Heart left ventricle (tissue), 16 donors: ENCODE measurements at regions of chr3 and their contacts with region 1.

Region 1: GRCh38 chr3:43286115-43286840 is at the start of gene SNRK:
- DNase-seq: peak; percentile 90 to 97 (median 93)
- ATAC-seq: peak; percentile 80 to 97 (median 90)
- H3K4me3 ChIP-seq: peak within 1 kb of the TSS; percentile 60 to 84 (median 74)
- H3K27ac ChIP-seq: peak within 1 kb of the TSS; percentile 56 to 97 (median 92)
- H3K4me1 ChIP-seq: peaks cover 18 to 56% (median 41%) of the 10 kb centered on the region in 12 donors
- H3K27me3 ChIP-seq: no peaks in the 10 kb centered on the region
- CTCF ChIP-seq: peak in 11 of 12 donors; percentile 10 to 59 (median 38)
- POLR2A ChIP-seq: peak; percentile 85 to 95
- total RNA-seq, gene SNRK: 16.8 to 41.5 (median 23.8) TPM

Region 2: GRCh38 chr3:43223670-43224364 is 62.5 kb before region 1 on chr3:
- intact Hi-C with region 1: loop called in 1 of 10 experiments (anchors 10 kb)
- DNase-seq: no peak
- ATAC-seq: no peak
- H3K4me3 ChIP-seq: no peak overlapping the region
- H3K27ac ChIP-seq: no peak overlapping the region
- H3K4me1 ChIP-seq: peaks cover 0 to 2% (median 0%) of the 10 kb centered on the region in 12 donors
- H3K27me3 ChIP-seq: no peaks in the 10 kb centered on the region
- CTCF ChIP-seq: peak; percentile 25 to 63 (median 46)
- POLR2A ChIP-seq: no peak

Region 3: GRCh38 chr3:43326891-43327581 is 40.8 kb after region 1 on chr3:
- intact Hi-C with region 1: loop called in 2 of 10 experiments (anchors 5 kb)
- DNase-seq: no peak
- ATAC-seq: peak; percentile 63 to 84 (median 78)
- H3K4me3 ChIP-seq: no peak overlapping the region
- H3K27ac ChIP-seq: peak overlapping the region in 11 of 12 donors; percentile 51 to 85 (median 74)
- H3K4me1 ChIP-seq: peaks cover 0 to 84% (median 56%) of the 10 kb centered on the region in 12 donors
- H3K27me3 ChIP-seq: no peaks in the 10 kb centered on the region
- CTCF ChIP-seq: no peak
- POLR2A ChIP-seq: no peak

Region 4: DNA sequence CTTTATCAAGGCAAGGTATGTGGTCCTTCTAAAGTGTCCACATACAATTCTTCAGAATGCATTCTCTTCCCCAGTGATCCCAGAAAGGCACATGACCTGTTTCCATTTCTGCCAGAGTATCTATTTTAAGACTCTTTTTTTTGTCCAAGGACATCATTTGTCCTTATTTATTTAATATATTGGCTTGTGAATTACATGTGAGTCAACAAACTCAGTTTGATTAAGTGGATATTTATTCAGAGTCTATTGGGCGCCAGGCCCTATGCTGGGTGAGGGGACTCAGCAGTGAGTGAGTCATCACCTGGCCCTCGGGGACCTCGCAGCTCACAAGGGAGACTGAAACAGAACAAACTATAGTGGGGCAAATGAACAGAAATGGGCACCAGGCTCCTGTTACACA is 136.9 kb after region 1 on chr3:
- intact Hi-C with region 1: loop called in 2 of 10 experiments (anchors 5 to 10 kb)
- DNase-seq: peak in 4 of 5 donors; percentile 32 to 51 (median 46)
- ATAC-seq: peak; percentile 11 to 58 (median 32)
- H3K4me3 ChIP-seq: no peak overlapping the region
- H3K27ac ChIP-seq: peak overlapping the region; percentile 12 to 95 (median 79)
- H3K4me1 ChIP-seq: peaks cover 0 to 55% (median 16%) of the 10 kb centered on the region in 12 donors
- H3K27me3 ChIP-seq: no peaks in the 10 kb centered on the region
- CTCF ChIP-seq: no peak
- POLR2A ChIP-seq: no peak

Region 5: GRCh38 chr3:43442872-43443395 is 156.7 kb after region 1 on chr3:
- intact Hi-C with region 1: no loop called
- DNase-seq: no peak
- ATAC-seq: no peak
- H3K4me3 ChIP-seq: no peak overlapping the region
- H3K27ac ChIP-seq: no peak overlapping the region
- H3K4me1 ChIP-seq: no peaks in the 10 kb centered on the region
- H3K27me3 ChIP-seq: no peaks in the 10 kb centered on the region
- CTCF ChIP-seq: no peak
- POLR2A ChIP-seq: no peak

Region 6: DNA sequence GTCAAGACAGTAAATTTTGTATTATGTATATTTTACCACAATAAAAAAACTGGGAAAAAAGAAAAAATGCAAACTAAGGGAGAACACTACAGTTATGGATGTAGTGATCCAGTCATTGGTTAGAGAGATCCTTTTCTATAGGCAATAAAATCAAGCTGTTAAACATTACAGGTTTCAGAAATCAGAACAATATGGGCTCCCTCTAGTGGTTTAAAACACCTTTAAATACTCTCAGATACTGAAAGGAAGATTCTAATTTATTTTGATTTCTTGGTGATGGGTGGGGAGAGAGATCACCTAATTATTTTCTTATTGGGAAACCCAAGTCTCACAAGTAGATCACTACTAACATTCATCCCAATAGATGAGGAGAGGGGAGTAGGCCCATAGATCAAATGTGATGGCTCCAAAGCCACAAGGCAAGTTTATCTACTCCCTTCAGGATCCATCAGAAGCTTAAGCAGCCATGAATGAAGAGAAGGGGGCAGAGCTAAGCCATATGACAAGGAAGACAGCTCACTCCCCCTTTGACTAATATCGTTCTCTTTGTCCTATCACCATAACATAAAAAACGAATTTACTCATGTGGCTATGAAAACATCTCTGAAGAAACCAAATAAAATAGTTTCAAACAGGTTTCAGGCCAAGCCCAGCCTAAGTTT is 216.9 kb after region 1 on chr3:
- intact Hi-C with region 1: loop called in 8 of 10 experiments (anchors 2 to 5 kb)
- DNase-seq: no peak
- ATAC-seq: peak in 3 of 4 donors; percentile 27 to 49 (median 41)
- H3K4me3 ChIP-seq: no peak overlapping the region
- H3K27ac ChIP-seq: no peak overlapping the region
- H3K4me1 ChIP-seq: peaks cover 0 to 30% (median 10%) of the 10 kb centered on the region in 12 donors
- H3K27me3 ChIP-seq: no peaks in the 10 kb centered on the region
- CTCF ChIP-seq: peak; percentile 43 to 72 (median 61)
- POLR2A ChIP-seq: no peak

Region 7: DNA sequence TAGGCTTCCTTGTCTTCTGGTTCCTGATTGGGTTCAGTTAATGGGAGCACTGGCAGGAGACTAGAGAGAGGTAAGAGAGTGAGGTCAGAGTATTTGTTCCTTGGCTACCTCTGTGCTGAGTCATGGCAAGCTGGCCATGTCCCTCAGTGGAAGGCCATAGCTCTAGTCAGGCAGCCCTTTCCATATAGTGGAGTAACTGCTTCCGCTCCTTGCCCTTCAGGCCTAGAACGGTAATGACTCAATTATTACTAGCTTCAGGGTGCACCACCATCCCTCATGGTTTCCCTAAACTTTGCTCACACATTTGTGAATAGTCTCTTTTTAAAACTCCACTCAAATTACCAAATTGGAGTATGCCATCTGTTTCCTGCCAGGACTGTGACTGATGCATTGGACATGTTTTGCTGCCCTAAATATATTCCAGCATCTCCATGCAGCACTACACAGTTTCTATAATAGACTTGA is 346.0 kb after region 1 on chr3:
- intact Hi-C with region 1: no loop called
- DNase-seq: no peak
- ATAC-seq: no peak
- H3K4me3 ChIP-seq: no peak overlapping the region
- H3K27ac ChIP-seq: no peak overlapping the region
- H3K4me1 ChIP-seq: no peaks in the 10 kb centered on the region
- H3K27me3 ChIP-seq: no peaks in the 10 kb centered on the region
- CTCF ChIP-seq: no peak
- POLR2A ChIP-seq: no peak